Left ventricle myocardium inferior (tissue), 1 donor: ENCODE measurements at regions of chr9 and their contacts with region 1.

Region 1: DNA sequence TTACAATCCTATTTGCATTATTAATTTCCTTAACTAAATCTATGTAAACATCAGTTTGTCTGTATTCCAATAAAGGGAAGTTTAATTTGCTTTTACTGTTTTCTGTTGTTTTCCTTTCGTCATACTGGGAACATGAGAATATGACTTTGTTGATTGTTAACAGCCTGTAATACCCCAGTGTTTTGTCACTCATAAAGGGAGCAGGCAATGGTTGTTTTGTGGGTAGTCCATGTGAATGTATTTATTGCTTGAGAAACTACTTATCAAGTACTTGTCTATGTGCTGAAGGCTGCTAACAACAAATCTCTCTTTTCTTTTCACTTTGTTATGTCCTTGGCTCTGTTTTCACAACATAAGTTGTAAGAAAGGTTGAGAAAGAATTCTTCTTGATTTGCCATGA is 1070.2 kb upstream of the ACO1 start:
- DNase-seq: no peak
- H3K4me3 ChIP-seq: no peak overlapping the region
- H3K27ac ChIP-seq: no peak overlapping the region
- H3K4me1 ChIP-seq: no peaks in the 10 kb centered on the region
- H3K27me3 ChIP-seq: no peaks in the 10 kb centered on the region
- CTCF ChIP-seq: no peak

Region 2: GRCh38 chr9:31135579-31135978 is 178.7 kb before region 1 on chr9:
- intact Hi-C with region 1: no loop called
- DNase-seq: no peak
- H3K4me3 ChIP-seq: no peak overlapping the region
- H3K27ac ChIP-seq: no peak overlapping the region
- H3K4me1 ChIP-seq: no peaks in the 10 kb centered on the region
- H3K27me3 ChIP-seq: no peaks in the 10 kb centered on the region
- CTCF ChIP-seq: no peak

Region 3: GRCh38 chr9:31372799-31373587 is 58.8 kb after region 1 on chr9:
- intact Hi-C with region 1: loop called (anchors 10 kb)
- DNase-seq: no peak
- H3K4me3 ChIP-seq: no peak overlapping the region
- H3K27ac ChIP-seq: no peak overlapping the region
- H3K4me1 ChIP-seq: no peaks in the 10 kb centered on the region
- H3K27me3 ChIP-seq: no peaks in the 10 kb centered on the region
- CTCF ChIP-seq: no peak